Activated B cell treated with CpG ODN at 0.5 μM for 24 hours (primary cell): ENCODE measurements at regions of chr12 and their contacts with region 1.

Region 1: DNA sequence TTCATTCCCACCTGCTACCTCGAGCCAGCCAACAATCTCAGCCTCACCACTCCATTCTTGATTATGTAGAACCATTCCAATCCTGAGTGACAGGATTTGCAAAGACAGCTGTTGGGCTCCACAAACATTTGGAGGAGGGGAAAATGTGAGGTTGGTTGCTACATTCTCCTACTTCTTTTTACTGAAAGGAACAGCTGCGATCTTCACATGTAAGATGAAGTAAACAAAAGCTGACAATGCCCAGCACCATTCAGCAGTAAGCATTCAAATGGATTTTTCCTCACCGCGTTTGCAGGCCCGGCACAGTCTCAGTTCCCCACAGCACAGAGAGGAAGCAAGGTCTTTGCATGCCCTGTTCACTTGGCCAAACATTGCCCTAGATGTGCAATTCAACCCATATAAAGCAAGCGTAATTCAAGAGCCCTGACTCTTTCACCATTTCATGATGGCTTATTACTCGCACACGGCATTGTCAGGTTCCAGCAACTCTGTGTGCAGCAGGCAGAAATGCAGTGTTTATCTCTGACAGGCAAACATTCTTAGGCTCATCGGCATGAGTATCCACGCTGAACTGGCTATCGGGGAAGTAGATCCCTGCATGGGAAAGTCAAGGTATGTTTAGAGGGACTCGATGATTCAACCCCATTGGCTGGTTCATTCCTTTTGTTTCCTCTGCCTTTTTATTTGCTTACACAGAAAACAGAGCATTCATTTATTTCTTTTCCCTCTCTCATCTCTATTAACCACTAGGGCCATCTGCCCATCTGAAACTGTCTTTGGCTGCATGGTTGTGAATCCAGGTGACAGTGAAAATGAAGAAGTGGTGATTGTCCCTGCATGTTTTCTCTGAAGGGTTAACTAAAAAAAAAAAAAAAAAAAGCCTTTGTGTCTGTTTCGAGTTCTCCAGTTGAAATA is 236.1 kb upstream of the PLEKHG7 start:
- DNase-seq: peak; percentile 51
- ATAC-seq: peak; percentile 74
- H3K4me3 Mint-ChIP-seq: peak overlapping the region; percentile 93
- H3K27ac Mint-ChIP-seq: peak overlapping the region; percentile 99
- H3K4me1 Mint-ChIP-seq: peaks cover 94% of the 10 kb centered on the region
- H3K27me3 Mint-ChIP-seq: no peaks in the 10 kb centered on the region
- CTCF ChIP-seq: no peak

Region 2: DNA sequence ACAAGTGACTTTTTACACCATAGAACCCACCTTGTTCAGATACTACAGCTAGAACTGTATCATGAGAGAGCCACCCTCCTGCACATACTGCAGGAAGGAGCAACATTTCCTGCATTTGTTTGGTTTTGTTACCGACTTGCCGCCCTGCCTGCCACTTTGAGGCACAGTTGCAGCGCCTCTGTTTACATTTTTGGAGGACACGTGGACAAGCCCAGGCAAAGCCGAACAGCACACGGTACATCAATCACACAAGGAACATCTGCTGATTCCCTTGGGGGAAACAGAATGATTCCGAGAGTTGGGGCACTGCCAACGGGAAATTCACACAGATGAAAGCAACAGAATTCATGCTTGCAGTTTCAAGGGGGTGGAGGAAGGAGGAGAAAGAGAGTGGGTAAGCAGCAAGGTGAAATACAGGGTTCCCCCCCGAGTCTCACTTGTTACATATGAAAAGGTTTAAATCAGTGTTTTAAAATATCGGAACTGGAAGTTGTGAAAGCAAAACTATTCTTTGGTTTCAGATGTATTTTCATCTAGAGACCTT is 431.7 kb before region 1 on chr12:
- CTCF ChIA-PET with region 1: no interaction called
- POLR2A ChIA-PET with region 1: no interaction called
- intact Hi-C with region 1: loop called (anchors 1 kb)
- DNase-seq: peak; percentile 50
- ATAC-seq: peak; percentile 91
- H3K4me3 Mint-ChIP-seq: peak overlapping the region; percentile 67
- H3K27ac Mint-ChIP-seq: peak overlapping the region; percentile 86
- H3K4me1 Mint-ChIP-seq: peaks cover 65% of the 10 kb centered on the region
- H3K27me3 Mint-ChIP-seq: no peaks in the 10 kb centered on the region
- CTCF ChIP-seq: no peak

Region 3: GRCh38 chr12:92396647-92397252 is 69.9 kb before region 1 on chr12:
- CTCF ChIA-PET with region 1: no interaction called
- POLR2A ChIA-PET with region 1: interaction called, 6 read pairs
- intact Hi-C with region 1: loop called (anchors 1 kb)
- DNase-seq: no peak
- ATAC-seq: no peak
- H3K4me3 Mint-ChIP-seq: no peak overlapping the region
- H3K27ac Mint-ChIP-seq: peak overlapping the region; percentile 93
- H3K4me1 Mint-ChIP-seq: peaks cover 70% of the 10 kb centered on the region
- H3K27me3 Mint-ChIP-seq: no peaks in the 10 kb centered on the region
- CTCF ChIP-seq: no peak

Region 4: GRCh38 chr12:92419201-92419600 is 47.4 kb before region 1 on chr12:
- CTCF ChIA-PET with region 1: no interaction called
- POLR2A ChIA-PET with region 1: no interaction called
- intact Hi-C with region 1: no loop called
- DNase-seq: no peak
- ATAC-seq: no peak
- H3K4me3 Mint-ChIP-seq: no peak overlapping the region
- H3K27ac Mint-ChIP-seq: peak overlapping the region; percentile 79
- H3K4me1 Mint-ChIP-seq: peaks cover 49% of the 10 kb centered on the region
- H3K27me3 Mint-ChIP-seq: no peaks in the 10 kb centered on the region
- CTCF ChIP-seq: no peak

Region 5: GRCh38 chr12:92431146-92431545 is 35.5 kb before region 1 on chr12:
- CTCF ChIA-PET with region 1: interaction called, 3 read pairs
- POLR2A ChIA-PET with region 1: interaction called, 18 read pairs
- intact Hi-C with region 1: loop called (anchors 1 kb)
- DNase-seq: peak; percentile 27
- ATAC-seq: peak; percentile 60
- H3K4me3 Mint-ChIP-seq: no peak overlapping the region
- H3K27ac Mint-ChIP-seq: peak overlapping the region; percentile 94
- H3K4me1 Mint-ChIP-seq: peaks cover 80% of the 10 kb centered on the region
- H3K27me3 Mint-ChIP-seq: no peaks in the 10 kb centered on the region
- CTCF ChIP-seq: no peak

Region 6: DNA sequence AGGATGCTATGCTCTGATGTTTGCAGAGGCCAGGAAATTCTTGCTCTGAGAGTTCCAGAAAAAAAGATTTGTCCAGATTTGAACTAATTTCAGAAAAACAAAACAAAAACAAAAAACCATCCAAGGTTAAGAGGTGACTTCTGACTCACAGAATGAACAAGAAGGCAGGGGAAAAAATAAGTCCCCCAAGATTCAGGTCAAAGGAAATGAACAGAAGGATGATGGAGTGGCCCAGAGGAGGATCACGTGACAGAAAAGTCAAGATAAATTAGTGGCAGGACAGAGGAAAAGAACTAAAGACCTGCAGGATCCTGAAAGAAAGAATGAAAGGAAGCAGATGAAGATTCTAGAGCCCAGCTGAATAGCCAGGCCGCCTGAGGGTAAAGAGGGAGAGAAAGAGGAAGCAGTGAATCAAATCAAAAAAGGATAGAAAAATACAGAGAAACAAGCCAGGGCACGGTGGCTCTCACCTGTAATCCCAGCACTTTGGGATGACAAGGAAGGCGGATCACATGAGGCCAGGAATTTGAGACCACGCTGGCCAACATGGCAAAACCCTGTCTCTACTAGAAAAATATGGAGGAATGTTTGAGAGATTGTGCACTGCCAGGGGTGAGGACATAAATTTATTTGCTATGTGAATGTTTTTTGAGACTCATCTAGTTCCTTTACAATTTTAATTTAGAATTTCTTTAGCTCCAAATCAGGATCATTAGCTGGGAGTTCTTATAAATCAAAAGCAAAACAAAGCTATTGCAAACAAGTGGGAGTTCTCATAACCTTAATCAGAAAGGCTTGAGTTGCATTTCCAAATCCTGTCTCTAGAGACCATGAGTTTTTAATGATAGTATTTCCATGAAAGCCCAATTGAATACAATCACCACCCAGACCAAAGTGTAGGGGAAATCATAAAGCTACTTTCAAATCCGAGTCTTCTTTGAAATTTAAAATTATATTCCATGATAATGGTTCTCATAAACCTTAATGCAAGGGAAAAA is 19.0 kb after region 1 on chr12:
- CTCF ChIA-PET with region 1: no interaction called
- POLR2A ChIA-PET with region 1: interaction called, 19 read pairs
- intact Hi-C with region 1: loop called (anchors 1 kb)
- DNase-seq: no peak
- ATAC-seq: peak; percentile 41
- H3K4me3 Mint-ChIP-seq: peak overlapping the region; percentile 50
- H3K27ac Mint-ChIP-seq: peak overlapping the region; percentile 85
- H3K4me1 Mint-ChIP-seq: peaks cover 88% of the 10 kb centered on the region
- H3K27me3 Mint-ChIP-seq: no peaks in the 10 kb centered on the region
- CTCF ChIP-seq: no peak

Region 7: GRCh38 chr12:92539113-92539749 is 72.6 kb after region 1 on chr12:
- CTCF ChIA-PET with region 1: no interaction called
- POLR2A ChIA-PET with region 1: interaction called, 4 read pairs
- intact Hi-C with region 1: loop called (anchors 2 kb)
- DNase-seq: no peak
- ATAC-seq: peak; percentile 32
- H3K4me3 Mint-ChIP-seq: peak overlapping the region; percentile 73
- H3K27ac Mint-ChIP-seq: peak overlapping the region; percentile 97
- H3K4me1 Mint-ChIP-seq: peaks cover 79% of the 10 kb centered on the region
- H3K27me3 Mint-ChIP-seq: no peaks in the 10 kb centered on the region
- CTCF ChIP-seq: no peak